ENCODE measurements at regions of chr3 and their contacts with region 1.

Region 1: DNA sequence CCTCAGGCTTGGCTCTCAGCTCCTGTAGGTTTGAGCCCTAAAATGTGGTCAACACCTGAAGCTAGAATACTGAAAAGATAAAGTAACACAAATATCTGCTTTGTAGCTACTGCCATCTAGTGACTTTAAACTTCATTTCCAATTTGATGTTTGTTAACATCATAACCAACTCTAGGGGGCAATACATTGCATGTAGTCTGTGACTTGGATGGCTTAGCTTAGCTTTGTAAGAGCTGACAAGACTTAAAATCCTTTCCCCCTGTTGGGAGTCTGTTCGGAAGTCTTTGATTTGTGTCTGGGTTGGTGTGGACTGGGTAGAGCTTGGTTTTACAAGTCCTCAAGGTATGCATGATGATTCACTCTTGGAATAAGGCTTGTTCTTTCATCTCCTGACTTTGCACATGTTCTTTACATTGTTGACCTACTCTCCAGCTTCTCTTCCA is 51.7 kb downstream of the SCN11A start:
- DNase-seq: peak; percentile 70
- H3K4me3 ChIP-seq: no peak overlapping the region
- H3K27ac ChIP-seq: no peak overlapping the region
- H3K4me1 ChIP-seq: no peaks in the 10 kb centered on the region
- H3K27me3 ChIP-seq: no peaks in the 10 kb centered on the region
- CTCF ChIP-seq: peak; percentile 62 to 71
- POLR2A ChIP-seq: no peak

Region 2: GRCh38 chr3:38496131-38496910 is 503.7 kb before region 1 on chr3 and contains the start of gene EXOG:
- CTCF ChIA-PET with region 1: interaction called, 11 read pairs
- POLR2A ChIA-PET with region 1: no interaction called
- dilution Hi-C with region 1: no loop called
- intact Hi-C with region 1: loop called (anchors 1 kb)
- DNase-seq: peak; percentile 93
- H3K4me3 ChIP-seq: peak within 1 kb of the TSS; percentile 73 to 84 (median 80)
- H3K27ac ChIP-seq: peak within 1 kb of the TSS; percentile 4
- H3K4me1 ChIP-seq: peaks cover 7% of the 10 kb centered on the region
- H3K27me3 ChIP-seq: no peaks in the 10 kb centered on the region
- CTCF ChIP-seq: peak; percentile 84 to 94
- POLR2A ChIP-seq: peak; percentile 77
- total RNA-seq, gene EXOG: 21.8 and 21.9 TPM in 2 replicates

Region 3: DNA sequence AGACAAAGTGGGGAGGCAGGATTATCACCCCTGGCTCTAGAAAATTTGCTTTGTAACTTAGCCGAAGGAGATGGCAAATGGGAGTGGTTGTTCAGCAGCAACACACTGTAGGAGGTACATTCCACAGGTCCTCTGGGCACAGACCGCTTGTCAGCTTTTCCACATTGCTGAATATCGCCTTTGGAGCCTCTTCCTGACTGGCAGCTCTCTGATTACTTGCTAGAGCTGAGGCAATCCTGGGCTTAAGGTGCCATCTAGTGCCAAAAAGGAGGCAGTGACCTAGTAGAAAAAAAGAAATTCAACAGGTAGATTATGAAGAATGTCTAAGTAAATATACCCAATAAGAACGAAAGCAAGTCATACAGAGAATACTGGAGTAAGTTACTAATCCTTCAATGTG is 337.5 kb before region 1 on chr3:
- CTCF ChIA-PET with region 1: interaction called, 13 read pairs
- POLR2A ChIA-PET with region 1: no interaction called
- dilution Hi-C with region 1: no loop called
- intact Hi-C with region 1: no loop called
- DNase-seq: peak; percentile 58
- H3K4me3 ChIP-seq: no peak overlapping the region
- H3K27ac ChIP-seq: no peak overlapping the region
- H3K4me1 ChIP-seq: no peaks in the 10 kb centered on the region
- H3K27me3 ChIP-seq: peaks cover 16 to 19% of the 10 kb centered on the region in 2 experiments
- CTCF ChIP-seq: peak; percentile 41 to 52
- POLR2A ChIP-seq: no peak

Region 4: DNA sequence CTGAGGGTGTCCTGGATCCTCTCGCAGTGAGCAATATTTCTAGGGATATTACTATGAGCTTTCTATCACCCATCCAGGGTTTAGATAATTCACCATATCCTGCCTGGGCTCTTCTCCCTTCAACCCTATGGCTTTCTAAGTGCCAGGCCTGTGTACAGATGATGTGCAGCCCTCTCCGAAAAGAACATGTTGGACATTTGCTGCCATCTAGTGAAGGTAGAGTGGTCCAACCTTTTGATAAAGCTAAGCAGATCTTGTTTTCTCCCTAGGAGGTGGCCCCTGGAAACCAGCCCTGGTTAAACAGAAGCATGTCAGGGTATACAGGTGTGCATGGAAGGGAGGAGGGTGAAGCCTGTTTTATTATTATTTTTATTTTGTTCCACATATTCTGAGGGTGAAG is 156.1 kb before region 1 on chr3:
- CTCF ChIA-PET with region 1: interaction called, 18 read pairs
- POLR2A ChIA-PET with region 1: no interaction called
- dilution Hi-C with region 1: no loop called
- intact Hi-C with region 1: loop called (anchors 1 kb)
- DNase-seq: peak; percentile 71
- H3K4me3 ChIP-seq: no peak overlapping the region
- H3K27ac ChIP-seq: no peak overlapping the region
- H3K4me1 ChIP-seq: no peaks in the 10 kb centered on the region
- H3K27me3 ChIP-seq: peaks cover 0 to 5% of the 10 kb centered on the region in 2 experiments
- CTCF ChIP-seq: peak; percentile 52 to 56
- POLR2A ChIP-seq: no peak

Region 5: DNA sequence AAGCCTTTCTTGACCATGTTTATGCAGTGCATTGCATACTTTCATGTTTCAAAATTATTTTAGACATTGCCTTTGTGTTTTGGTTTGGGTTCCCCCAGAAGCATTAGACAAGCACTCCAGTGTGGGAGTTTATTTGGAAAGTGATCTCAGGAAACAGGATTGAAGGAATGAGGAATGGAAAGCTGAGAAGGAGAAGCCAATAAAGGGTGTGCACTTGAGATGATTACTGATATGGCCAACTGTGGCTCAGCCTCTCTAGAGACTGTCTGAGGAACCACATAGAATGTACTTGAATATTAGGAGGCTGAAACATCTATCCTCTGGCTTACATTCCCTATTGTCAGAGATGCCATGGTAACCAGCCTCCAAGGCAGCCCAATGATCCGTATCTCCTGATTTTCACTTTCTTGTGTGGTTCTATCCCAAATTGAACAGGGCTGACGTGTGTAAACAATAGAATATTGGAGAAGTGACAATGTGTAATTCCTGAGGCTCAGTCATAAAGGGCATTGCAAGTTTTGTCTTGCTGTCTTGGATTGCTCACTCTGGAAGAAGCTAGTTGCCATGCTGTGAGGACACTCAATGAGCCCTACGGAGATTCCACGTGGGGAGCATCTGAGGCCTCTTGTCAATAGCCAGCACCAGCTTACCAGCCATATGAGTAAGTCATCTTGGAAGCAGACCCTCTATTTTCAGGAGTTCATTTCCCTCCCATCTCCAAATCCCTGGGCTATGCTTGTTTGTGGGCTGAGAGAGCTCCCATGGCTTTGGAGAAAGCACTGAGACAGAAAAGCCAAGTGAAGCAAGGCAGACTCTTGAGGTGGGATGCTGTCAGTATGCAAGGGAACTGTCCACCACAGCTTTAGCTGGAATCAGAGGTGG is 33.0 kb before region 1 on chr3:
- CTCF ChIA-PET with region 1: interaction called, 24 read pairs
- POLR2A ChIA-PET with region 1: no interaction called
- dilution Hi-C with region 1: no loop called
- intact Hi-C with region 1: no loop called
- DNase-seq: no peak
- H3K4me3 ChIP-seq: no peak overlapping the region
- H3K27ac ChIP-seq: no peak overlapping the region
- H3K4me1 ChIP-seq: no peaks in the 10 kb centered on the region
- H3K27me3 ChIP-seq: peaks cover 4 to 6% of the 10 kb centered on the region in 2 experiments
- CTCF ChIP-seq: no peak
- POLR2A ChIP-seq: no peak

Region 6: DNA sequence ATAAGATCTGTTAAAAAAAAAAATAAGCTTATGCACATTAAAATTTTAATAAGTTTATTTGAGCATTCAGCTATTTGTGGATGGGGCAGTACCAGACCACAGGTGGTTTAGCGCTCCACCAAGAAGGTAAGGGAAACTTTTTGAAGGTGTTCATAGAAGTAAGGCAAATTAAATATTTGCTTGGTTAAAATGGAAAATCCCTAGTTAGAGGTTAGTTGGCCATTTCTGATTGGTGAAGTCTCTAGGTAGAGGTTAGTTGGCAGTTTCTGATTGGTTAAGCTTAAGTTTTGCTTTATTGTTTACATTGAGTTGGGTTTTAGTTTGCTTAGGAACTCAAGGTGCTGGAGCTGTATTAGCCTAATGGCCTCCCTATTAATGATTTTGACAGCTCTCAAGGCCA is 21.0 kb after region 1 on chr3:
- CTCF ChIA-PET with region 1: interaction called, 10 read pairs
- POLR2A ChIA-PET with region 1: no interaction called
- dilution Hi-C with region 1: no loop called
- intact Hi-C with region 1: no loop called
- DNase-seq: no peak
- H3K4me3 ChIP-seq: no peak overlapping the region
- H3K27ac ChIP-seq: no peak overlapping the region
- H3K4me1 ChIP-seq: no peaks in the 10 kb centered on the region
- H3K27me3 ChIP-seq: peaks cover 1 to 11% of the 10 kb centered on the region in 2 experiments
- CTCF ChIP-seq: no peak
- POLR2A ChIP-seq: no peak

Region 7: GRCh38 chr3:39038165-39038564 is 38.1 kb after region 1 on chr3:
- CTCF ChIA-PET with region 1: no interaction called
- POLR2A ChIA-PET with region 1: no interaction called
- dilution Hi-C with region 1: no loop called
- intact Hi-C with region 1: no loop called
- DNase-seq: no peak
- H3K4me3 ChIP-seq: no peak overlapping the region
- H3K27ac ChIP-seq: no peak overlapping the region
- H3K4me1 ChIP-seq: no peaks in the 10 kb centered on the region
- H3K27me3 ChIP-seq: peaks cover 0 to 6% of the 10 kb centered on the region in 2 experiments
- CTCF ChIP-seq: no peak
- POLR2A ChIP-seq: no peak